Activated CD4-positive, alpha-beta T cell treated with anti-CD3 and anti-CD28 coated beads, Interleukin-2, amount 10 ng/mL, durations not matched to agents 24 days and 14 days (primary cell): ENCODE measurements at regions of chr3 and their contacts with region 1.

Region 1: DNA sequence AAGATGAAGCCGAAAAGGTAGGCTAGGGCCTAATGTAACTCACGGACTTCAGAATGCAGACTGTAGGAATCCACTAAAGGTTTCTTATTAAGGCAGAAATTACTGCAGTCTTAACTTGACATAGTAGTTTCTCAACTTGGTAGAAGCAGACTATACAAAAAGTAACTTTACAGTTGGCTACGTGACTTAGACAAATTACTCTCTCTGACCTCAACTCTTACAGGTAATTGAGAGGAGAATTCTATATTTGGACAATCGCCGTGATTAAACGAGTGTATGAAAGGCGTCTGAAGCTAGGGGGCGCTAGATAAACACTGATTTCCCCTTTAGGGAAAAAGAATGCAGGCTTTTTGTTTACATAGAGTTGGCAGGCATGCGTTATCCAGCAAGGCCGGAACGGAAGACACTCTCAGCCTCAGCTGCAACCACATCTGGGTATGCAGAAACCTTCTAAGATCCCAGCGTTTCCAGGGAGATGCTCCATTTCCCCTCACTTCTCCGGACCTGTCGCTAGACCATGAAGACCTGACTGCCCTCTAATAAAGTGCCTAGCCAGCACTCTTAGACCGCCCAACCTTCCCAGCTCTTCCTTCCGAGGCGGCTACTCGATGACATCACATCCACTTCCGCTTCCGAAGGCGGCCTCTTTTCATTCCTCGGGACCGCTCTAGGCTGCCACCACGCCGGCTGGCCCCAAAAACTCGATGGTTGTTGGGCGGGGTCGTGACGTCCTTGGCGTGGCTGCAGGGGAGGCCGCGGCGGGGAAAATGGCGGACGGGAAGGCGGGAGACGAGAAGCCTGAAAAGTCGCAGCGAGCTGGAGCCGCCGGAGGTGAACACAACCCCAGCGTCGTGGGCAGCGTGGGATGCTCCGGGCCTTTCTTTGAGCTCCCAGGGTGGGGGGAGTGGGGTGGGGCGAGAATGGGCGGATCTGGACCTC is at the start of gene PCNP:
- DNase-seq: peak; percentile 100
- H3K4me3 Mint-ChIP-seq: peak within 1 kb of the TSS; percentile 94
- H3K27ac Mint-ChIP-seq: peak within 1 kb of the TSS; percentile 95
- H3K4me1 Mint-ChIP-seq: peaks cover 46% of the 10 kb centered on the region
- H3K27me3 Mint-ChIP-seq: no peaks in the 10 kb centered on the region
- total RNA-seq, gene PCNP: 190 and 205 TPM in 2 replicates

Region 2: GRCh38 chr3:101561630-101562328 is 11.9 kb before region 1 on chr3 and contains the start of gene TRMT10C:
- intact Hi-C with region 1: loop called (anchors 1 kb)
- DNase-seq: peak; percentile 98
- H3K4me3 Mint-ChIP-seq: peak within 1 kb of the TSS; percentile 98
- H3K27ac Mint-ChIP-seq: peak within 1 kb of the TSS; percentile 99
- H3K4me1 Mint-ChIP-seq: peaks cover 30% of the 10 kb centered on the region
- H3K27me3 Mint-ChIP-seq: peaks cover 2% of the 10 kb centered on the region
- total RNA-seq, gene TRMT10C: 58.3 and 59.9 TPM in 2 replicates

Region 3: GRCh38 chr3:101635954-101636798 is 62.5 kb after region 1 on chr3:
- intact Hi-C with region 1: loop called (anchors 1 kb)
- DNase-seq: peak; percentile 91
- H3K4me3 Mint-ChIP-seq: no peak overlapping the region
- H3K27ac Mint-ChIP-seq: no peak overlapping the region
- H3K4me1 Mint-ChIP-seq: peaks cover 2% of the 10 kb centered on the region
- H3K27me3 Mint-ChIP-seq: no peaks in the 10 kb centered on the region

Region 4: DNA sequence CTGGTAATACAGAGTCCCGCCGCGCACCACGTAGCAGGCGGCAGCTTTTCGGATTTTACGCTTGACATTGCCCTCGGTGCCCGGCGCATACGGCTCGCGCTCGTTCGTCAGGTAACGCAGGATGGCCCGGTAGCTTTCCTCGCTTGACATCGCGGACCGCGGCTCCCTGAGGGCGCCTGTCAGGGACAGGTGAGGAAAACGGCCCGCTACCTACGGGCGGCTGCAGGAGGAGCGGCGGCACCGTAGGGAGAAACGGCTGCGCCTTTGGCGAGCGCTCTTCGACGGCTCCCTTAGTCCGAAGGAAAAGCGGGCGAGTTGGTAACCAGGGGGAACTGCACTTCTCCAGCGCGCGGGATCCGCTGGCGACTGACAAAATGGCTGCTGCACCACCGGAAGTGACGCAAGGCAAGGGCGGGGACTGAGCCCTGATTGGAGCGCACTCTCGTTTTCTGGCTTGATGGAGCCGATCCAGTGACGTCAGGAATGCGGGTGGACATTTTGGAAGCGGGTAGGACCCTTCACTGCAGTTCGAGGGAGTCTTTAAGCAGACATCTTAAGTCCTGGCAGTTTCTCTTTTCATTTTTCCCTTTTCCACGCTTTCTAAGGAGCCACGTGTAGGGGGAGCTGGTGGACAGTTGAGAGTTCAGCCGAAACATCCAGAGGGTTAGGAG is 103.2 kb after region 1 on chr3 and contains the start of gene ZBTB11:
- intact Hi-C with region 1: loop called (anchors 1 kb)
- DNase-seq: peak; percentile 100
- H3K4me3 Mint-ChIP-seq: peak within 1 kb of the TSS; percentile 89
- H3K27ac Mint-ChIP-seq: peak within 1 kb of the TSS; percentile 97
- H3K4me1 Mint-ChIP-seq: peaks cover 36% of the 10 kb centered on the region
- H3K27me3 Mint-ChIP-seq: no peaks in the 10 kb centered on the region
- total RNA-seq, gene ZBTB11: 29.0 and 30.2 TPM in 2 replicates

Region 5: DNA sequence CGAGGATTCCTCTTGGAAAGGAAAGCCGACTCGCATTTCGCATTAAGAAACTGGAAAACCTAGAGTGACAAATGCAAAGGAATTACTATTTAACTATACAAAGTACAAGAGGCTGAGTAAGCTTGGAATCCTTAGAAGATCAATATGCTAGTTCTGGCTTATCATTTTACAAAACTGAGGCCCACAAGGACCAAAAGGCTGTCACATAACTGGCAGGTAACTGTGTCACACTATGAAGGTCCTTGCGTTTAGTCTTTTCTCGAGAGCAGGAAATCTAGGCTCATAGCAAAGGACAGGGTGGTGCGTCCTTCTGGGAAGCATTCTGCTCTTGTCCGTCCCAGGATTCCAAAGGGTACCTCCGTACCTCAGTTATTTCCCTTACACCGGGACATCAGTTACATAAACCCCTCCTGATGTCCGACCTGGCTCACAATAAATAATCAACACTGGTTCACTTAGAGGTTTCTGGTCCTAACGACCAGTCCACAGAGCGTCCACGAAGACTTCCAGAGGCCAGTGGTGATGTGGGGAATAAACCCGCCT is 112.2 kb after region 1 on chr3:
- intact Hi-C with region 1: loop called (anchors 1 kb)
- DNase-seq: no peak
- H3K4me3 Mint-ChIP-seq: peak overlapping the region; percentile 98
- H3K27ac Mint-ChIP-seq: peak overlapping the region; percentile 98
- H3K4me1 Mint-ChIP-seq: peaks cover 24% of the 10 kb centered on the region
- H3K27me3 Mint-ChIP-seq: no peaks in the 10 kb centered on the region

Region 6: DNA sequence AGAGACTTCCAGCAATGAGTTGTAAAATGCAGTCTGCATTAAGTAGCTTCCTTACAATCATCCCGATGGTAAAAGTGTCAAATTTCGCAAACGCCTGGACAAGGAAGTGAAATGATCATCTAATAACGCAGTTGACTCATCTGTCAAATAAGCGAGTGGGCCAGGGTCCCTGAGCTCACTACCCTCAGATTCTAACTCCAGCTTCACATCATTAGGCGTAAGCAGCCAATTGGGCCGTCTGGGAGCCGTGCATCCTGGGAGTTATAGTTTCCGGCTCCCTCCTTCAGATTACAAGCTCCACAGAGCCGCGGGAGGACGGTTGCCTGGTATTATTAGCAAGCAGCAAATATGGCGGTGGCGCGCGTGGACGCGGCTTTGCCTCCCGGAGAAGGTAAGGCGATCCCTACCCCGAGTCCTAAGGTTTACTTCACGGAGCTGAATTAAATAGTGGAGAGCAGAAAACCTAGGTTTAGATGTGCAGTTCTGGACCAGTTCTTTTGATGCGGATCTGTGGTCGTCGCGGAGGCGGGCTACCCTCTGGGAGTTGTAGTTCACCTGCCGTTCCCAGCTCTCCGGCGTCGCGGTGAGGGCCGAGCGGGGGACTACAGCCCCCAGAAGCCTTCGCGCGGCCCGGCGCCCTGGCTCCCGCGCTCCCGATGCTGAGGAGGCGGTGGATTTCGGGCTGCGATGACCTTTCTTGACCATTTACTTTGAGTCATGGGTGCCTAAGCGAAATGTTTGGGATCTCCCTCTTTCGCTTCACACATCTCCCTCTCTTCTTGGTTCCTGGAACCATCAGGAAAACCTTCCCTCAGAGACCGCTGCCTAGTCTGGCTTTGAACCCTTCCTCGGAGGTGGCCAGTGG is 150.8 kb after region 1 on chr3 and contains the start of gene CEP97:
- intact Hi-C with region 1: loop called (anchors 2 kb)
- DNase-seq: peak; percentile 96
- H3K4me3 Mint-ChIP-seq: peak within 1 kb of the TSS; percentile 95
- H3K27ac Mint-ChIP-seq: peak within 1 kb of the TSS; percentile 97
- H3K4me1 Mint-ChIP-seq: peaks cover 35% of the 10 kb centered on the region
- H3K27me3 Mint-ChIP-seq: no peaks in the 10 kb centered on the region
- total RNA-seq, gene CEP97: 20.3 and 22.8 TPM in 2 replicates

Region 7: DNA sequence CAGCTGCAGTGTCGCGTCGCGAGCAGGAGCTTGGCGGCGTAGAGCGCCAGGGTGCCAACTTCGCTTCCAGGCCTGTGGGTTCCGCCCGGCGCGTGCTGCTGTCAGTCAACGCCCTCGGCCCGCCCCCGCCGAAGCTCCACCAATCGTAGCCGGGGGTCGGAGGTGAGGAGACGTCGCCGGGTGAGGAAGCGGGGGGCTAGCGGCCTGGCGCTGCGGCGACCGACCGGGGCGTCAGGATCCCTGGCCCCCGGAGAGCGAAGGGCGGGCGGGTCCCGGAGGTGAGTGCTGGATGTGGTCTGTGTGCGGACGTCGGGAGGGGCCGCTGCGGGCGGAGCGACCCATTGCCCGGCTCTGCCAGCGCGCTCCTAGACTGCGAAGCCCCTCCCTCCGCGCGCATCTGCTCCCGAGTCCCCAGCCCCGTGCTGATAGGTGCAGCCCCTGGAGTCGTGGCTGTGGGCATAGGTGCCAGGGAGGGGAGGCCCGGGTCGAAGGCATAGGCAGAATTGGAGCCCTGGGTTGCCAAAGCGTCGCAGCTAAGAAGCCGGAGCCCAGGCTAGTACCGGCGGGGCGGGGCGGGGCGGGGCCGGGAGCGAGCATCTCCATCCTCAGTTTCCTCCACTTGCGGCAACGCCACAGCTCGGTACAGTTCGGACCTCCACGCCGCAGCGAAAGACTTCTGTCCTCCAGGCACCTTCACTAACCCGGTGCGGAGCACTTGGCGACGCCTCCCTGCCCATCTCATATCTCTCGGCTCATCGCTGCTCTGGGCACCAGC is 205.5 kb after region 1 on chr3 and contains the start of gene NXPE3:
- intact Hi-C with region 1: loop called (anchors 10 kb)
- DNase-seq: peak; percentile 98
- H3K4me3 Mint-ChIP-seq: peak within 1 kb of the TSS; percentile 97
- H3K27ac Mint-ChIP-seq: peak within 1 kb of the TSS; percentile 94
- H3K4me1 Mint-ChIP-seq: peaks cover 31% of the 10 kb centered on the region
- H3K27me3 Mint-ChIP-seq: no peaks in the 10 kb centered on the region
- total RNA-seq, gene NXPE3: 17.2 and 18.2 TPM in 2 replicates

Region 8: DNA sequence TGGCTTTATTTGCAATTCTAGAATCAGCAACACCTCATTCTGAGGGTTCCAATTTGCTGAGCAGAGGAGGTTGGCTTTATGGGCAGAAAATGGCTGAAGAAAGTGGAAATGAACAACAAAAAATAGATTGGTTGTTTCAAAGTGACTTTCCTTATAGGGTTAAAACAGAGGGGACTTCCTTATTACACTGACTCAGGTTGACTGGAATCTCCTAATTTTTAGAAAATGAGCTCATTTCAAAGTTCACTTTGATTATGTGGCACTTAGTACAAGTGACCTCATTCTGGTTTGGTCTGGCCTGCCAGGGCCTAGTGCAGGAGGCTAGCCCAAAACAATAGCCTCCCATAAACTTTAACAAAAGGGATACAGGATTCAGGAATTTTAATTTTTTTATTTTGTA is 317.0 kb after region 1 on chr3:
- intact Hi-C with region 1: no loop called
- DNase-seq: no peak
- H3K4me3 Mint-ChIP-seq: no peak overlapping the region
- H3K27ac Mint-ChIP-seq: no peak overlapping the region
- H3K4me1 Mint-ChIP-seq: peaks cover 6% of the 10 kb centered on the region
- H3K27me3 Mint-ChIP-seq: no peaks in the 10 kb centered on the region

Region 9: DNA sequence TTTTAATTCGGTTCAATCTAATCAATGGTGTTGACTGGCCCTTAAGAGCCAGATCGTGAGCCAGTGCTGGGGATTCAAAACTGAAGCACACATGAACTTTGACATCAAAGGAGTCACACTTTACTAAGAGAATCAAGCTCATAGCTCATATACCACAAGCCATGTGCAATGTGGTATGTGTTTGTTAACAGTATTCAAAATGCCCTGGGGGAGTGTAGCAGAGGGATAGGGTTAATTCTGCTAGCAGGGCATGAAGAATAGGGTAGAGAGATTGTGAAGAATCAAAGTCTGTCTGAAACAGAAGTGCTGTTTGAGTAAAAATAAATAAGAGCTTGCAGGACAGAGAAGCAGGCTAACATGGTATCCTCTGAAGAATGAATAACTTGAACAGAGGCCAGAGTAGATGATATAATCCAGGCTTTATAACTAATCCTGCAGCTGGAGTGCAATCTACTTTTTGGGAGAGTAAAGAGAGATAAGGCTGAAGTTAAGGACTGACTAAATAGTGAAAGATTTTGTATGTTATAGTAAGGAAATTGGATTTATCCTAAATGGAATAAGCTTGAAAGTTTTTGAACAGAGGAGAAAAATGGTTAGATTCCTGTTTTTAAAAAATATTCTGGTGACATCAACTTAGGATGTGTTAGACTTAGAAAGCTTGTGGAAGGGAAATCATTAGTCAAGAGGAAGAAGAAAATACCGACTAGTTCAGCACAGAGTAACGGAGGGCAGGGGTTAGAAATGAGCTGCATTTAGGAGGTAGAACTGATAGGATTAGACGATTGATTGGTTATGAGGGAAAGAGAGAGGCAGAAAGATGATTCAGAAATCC is 567.6 kb after region 1 on chr3:
- intact Hi-C with region 1: no loop called
- DNase-seq: no peak
- H3K4me3 Mint-ChIP-seq: no peak overlapping the region
- H3K27ac Mint-ChIP-seq: no peak overlapping the region
- H3K4me1 Mint-ChIP-seq: no peaks in the 10 kb centered on the region
- H3K27me3 Mint-ChIP-seq: peaks cover 15% of the 10 kb centered on the region